HepG2 (cell line): ENCODE measurements at regions of chr10 and their contacts with region 1.

Region 1: DNA sequence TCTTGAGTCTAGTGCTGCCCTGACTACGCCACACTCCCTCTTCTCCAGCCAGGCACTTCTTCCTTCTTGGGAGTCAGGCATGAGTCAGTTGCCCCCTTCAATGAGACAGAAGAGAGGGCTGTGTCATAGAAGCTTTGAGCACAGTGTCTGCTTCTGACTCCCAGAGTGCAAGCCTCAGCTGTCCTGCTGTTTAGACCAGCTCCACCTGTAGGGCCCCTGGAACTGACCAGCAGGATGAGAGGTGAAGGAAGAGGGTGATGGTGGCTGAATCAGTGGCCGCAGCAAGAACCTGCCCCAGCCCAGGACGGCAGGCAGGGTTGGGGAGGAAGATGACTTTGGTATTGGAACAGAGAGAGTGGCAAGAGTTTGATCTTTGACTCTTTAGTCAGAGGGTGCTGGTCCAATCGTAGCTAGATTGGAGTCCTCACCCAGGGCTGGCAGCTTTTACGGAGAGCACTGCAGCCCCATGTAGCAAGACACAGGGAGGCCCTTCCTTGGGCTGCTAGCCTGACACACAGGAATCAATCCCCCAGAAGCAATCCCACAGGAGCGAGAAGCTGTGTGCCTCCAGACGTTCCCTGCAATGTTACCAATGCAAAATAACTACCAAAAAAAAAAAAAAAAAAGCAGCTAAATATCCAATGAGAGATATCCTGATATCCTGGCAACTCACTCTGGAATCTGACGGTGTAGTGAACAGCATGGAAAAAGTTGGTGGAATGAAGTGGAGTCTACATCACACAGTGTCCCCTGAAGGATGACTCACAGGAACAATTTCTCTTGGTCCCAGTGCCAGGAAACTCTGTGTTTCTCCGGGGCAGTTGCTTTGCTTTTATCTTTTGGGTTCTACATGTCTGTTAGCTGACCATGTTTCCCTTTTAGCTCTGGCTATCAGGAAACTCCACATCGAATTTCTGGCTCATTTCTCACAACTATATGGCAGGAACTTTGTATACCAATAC is 6.9 kb downstream of the C10orf62 start:
- DNase-seq: peak; percentile 64
- ATAC-seq: peak; percentile 85
- H3K4me3 ChIP-seq: peak overlapping the region in 1 of 3 experiments; percentile 6; a peak in 1 of 6 replicates
- H3K27ac ChIP-seq: peak overlapping the region; percentile 37
- H3K4me1 ChIP-seq: peaks cover 33% of the 10 kb centered on the region
- H3K27me3 ChIP-seq: no peaks in the 10 kb centered on the region; a peak in 1 of 5 replicates
- CTCF ChIP-seq: 0 out of 2 replicates have a peak, but pooled peaks have one; percentile 15
- EP300 ChIP-seq: peak in 1 of 2 experiments; percentile 22; a peak in 1 of 4 replicates
- POLR2A ChIP-seq: no peak
- RAD21 ChIP-seq: no peak

Region 2: DNA sequence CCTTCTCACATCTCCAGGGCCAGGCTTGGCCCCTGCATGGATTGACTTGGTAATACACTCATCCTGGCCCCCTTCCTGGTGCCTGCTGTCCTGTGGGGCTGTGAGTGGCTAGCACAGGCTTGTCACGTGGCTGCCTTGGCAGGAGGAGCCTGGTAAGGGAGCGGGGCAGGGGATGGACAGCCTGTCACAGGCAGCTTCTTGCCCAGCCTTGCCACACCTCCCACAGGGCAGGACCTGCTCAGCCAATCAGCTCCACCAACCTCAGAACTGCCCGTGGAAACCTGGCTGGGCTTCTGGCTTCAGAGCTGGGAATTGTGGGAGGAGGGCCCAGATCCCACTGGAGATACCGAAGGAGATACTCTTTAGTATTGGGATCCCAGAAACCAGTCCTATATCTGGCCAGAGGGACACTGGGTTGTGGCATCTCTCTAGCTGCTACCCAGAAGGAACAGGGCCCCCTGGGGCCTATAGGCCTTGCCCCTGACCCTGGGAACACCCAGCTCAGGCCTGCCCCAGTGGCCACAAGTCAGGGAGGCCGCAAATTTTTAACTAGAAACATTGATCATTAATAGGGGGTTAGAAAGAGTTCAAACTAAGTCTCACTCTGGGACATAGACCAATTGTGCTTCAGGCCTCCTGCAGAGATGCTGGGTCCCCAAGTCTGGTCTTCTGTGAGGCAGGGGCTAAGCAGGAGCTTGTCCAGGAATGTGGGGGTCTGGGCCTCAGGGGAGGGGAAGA is 12.2 kb before region 1 on chr10 and contains the start of gene HOGA1:
- CTCF ChIA-PET with region 1: no interaction called
- POLR2A ChIA-PET with region 1: interaction called, 23 read pairs
- in situ Hi-C with region 1: no loop called
- intact Hi-C with region 1: loop called (anchors 1 kb)
- DNase-seq: peak; percentile 91
- ATAC-seq: peak; percentile 97
- H3K4me3 ChIP-seq: peak within 1 kb of the TSS; percentile 48 to 72 (median 54)
- H3K27ac ChIP-seq: peak within 1 kb of the TSS; percentile 69
- H3K4me1 ChIP-seq: peaks cover 60% of the 10 kb centered on the region
- H3K27me3 ChIP-seq: peaks cover 0 to 12% of the 10 kb centered on the region in 2 experiments; a peak in 1 of 5 replicates
- CTCF ChIP-seq: no peak
- EP300 ChIP-seq: no peak
- POLR2A ChIP-seq: peak; percentile 42 to 53; a peak in 3 of 4 replicates
- RAD21 ChIP-seq: no peak
- total RNA-seq, gene HOGA1: 18.8 and 19.5 TPM in 2 replicates

Region 3: GRCh38 chr10:98115031-98115787 is 518.8 kb after region 1 on chr10:
- CTCF ChIA-PET with region 1: no interaction called
- POLR2A ChIA-PET with region 1: no interaction called
- in situ Hi-C with region 1: no loop called
- intact Hi-C with region 1: no loop called
- DNase-seq: no peak
- ATAC-seq: no peak; the same call in 2 of the 3 replicates
- H3K4me3 ChIP-seq: no peak overlapping the region
- H3K27ac ChIP-seq: no peak overlapping the region
- H3K4me1 ChIP-seq: no peaks in the 10 kb centered on the region
- H3K27me3 ChIP-seq: peaks cover 1 to 31% of the 10 kb centered on the region in 2 experiments; a peak in 3 of 5 replicates
- CTCF ChIP-seq: no peak
- EP300 ChIP-seq: no peak
- POLR2A ChIP-seq: no peak
- RAD21 ChIP-seq: no peak